CD14-positive monocyte (primary cell): ENCODE measurements at regions of chr3 and their contacts with region 1.

Region 1: DNA sequence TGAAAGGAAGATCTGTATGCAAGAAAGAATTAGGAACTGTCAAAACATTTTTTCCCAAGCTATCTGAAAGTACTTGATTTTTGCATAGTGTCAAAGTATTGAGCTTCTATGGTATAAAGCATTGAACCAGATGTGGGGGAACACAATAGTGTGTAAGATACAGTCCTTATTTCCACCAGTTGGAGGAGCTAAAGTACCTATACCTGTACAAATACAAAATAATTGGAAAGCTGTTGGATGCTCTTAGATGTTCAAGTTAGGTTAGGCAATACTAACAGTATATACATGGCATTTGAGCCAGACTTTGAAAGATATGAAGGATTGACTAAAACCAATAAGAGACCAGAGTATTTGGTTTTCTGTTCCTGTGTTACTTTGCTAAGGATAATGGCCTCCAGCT is 148.3 kb downstream of the B3GALNT1 start:
- DNase-seq: peak; percentile 21 to 55 (median 40)
- H3K4me3 ChIP-seq: no peak overlapping the region
- H3K4me3 Mint-ChIP-seq: no peak overlapping the region
- H3K27ac ChIP-seq: no peak overlapping the region
- H3K27ac Mint-ChIP-seq: no peak overlapping the region
- H3K4me1 ChIP-seq: no peaks in the 10 kb centered on the region
- H3K4me1 Mint-ChIP-seq: no peaks in the 10 kb centered on the region
- H3K27me3 ChIP-seq: no peaks in the 10 kb centered on the region
- H3K27me3 Mint-ChIP-seq: no peaks in the 10 kb centered on the region
- CTCF ChIP-seq: peak; percentile 78

Region 2: DNA sequence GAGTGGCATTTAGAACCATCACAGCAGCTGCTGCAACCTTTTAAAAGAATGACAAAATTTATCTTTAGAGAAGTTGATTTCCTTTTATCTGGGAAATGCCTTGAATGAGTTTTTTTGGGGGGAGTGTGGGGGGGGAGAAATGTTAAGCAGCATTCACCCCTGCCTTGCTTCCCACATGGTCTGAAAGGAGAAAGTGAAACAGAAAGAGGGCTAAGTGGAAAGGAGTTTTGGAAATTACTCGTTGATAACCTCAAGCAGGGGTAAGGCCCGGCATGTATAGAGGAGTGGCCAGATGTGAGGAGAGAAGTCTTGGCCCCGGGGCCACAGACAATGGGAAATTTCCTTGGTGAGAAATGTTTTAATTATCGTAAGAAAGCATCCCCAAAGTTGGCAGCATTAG is 124.8 kb after region 1 on chr3:
- intact Hi-C with region 1: loop called in 1 of 2 experiments (anchors 10 kb)
- DNase-seq: no peak
- H3K4me3 ChIP-seq: peak overlapping the region in 2 of 3 experiments; percentile 36 to 56
- H3K4me3 Mint-ChIP-seq: peak overlapping the region; percentile 67 to 79
- H3K27ac ChIP-seq: peak overlapping the region in 1 of 2 donors; percentile 55
- H3K27ac Mint-ChIP-seq: peak overlapping the region in 6 of 7 donors; percentile 75 to 89 (median 82)
- H3K4me1 ChIP-seq: peaks cover 14 to 24% of the 10 kb centered on the region in 2 donors
- H3K4me1 Mint-ChIP-seq: peaks cover 21% of the 10 kb centered on the region
- H3K27me3 ChIP-seq: no peaks in the 10 kb centered on the region
- H3K27me3 Mint-ChIP-seq: peaks cover 0 to 1% (median 0%) of the 10 kb centered on the region in 3 donors
- CTCF ChIP-seq: no peak

Region 3: GRCh38 chr3:161423911-161424522 is 467.2 kb after region 1 on chr3:
- intact Hi-C with region 1: loop called in 1 of 2 experiments (anchors 10 kb)
- DNase-seq: peak; percentile 18 to 60 (median 28)
- H3K4me3 ChIP-seq: no peak overlapping the region
- H3K4me3 Mint-ChIP-seq: no peak overlapping the region
- H3K27ac ChIP-seq: no peak overlapping the region
- H3K27ac Mint-ChIP-seq: no peak overlapping the region
- H3K4me1 ChIP-seq: no peaks in the 10 kb centered on the region
- H3K4me1 Mint-ChIP-seq: no peaks in the 10 kb centered on the region
- H3K27me3 ChIP-seq: no peaks in the 10 kb centered on the region
- H3K27me3 Mint-ChIP-seq: peaks cover 0 to 2% (median 0%) of the 10 kb centered on the region in 3 donors
- CTCF ChIP-seq: peak; percentile 83